ENCODE measurements at regions of chr1 and their contacts with region 1.

Region 1: GRCh38 chr1:27556781-27557595 is 47.0 kb downstream of the AHDC1 start:
- DNase-seq: peak; percentile 85
- ATAC-seq: peak; percentile 84
- H3K4me3 Mint-ChIP-seq: no peak overlapping the region
- H3K27ac Mint-ChIP-seq: peak overlapping the region; percentile 47
- H3K4me1 Mint-ChIP-seq: peaks cover 21% of the 10 kb centered on the region
- H3K27me3 Mint-ChIP-seq: no peaks in the 10 kb centered on the region

Region 2: DNA sequence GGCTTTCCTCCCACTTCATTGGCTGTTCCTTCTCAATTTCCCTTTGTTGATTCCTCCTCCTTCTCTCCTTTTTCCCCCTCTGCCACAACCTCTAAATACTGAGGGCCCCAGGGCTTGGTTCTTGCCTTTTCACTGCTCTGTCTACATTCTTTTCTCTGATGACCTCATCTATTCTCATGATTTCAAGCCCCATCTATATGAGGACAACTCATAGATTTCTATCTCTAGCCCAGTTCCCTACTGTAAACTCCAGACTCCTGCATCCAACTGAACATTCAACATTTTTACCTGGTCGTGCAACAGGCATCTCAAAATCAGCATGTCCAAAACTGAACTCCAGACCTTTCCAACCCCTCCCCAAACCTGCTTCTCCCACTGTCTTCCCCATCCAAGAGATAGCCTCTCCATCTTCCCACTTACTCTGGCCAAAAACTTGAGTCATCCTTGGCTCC is 390.6 kb before region 1 on chr1:
- CTCF ChIA-PET with region 1: no interaction called
- POLR2A ChIA-PET with region 1: no interaction called
- intact Hi-C with region 1: no loop called
- DNase-seq: no peak
- ATAC-seq: no peak
- H3K4me3 Mint-ChIP-seq: no peak overlapping the region
- H3K27ac Mint-ChIP-seq: no peak overlapping the region
- H3K4me1 Mint-ChIP-seq: peaks cover 10% of the 10 kb centered on the region
- H3K27me3 Mint-ChIP-seq: no peaks in the 10 kb centered on the region

Region 3: DNA sequence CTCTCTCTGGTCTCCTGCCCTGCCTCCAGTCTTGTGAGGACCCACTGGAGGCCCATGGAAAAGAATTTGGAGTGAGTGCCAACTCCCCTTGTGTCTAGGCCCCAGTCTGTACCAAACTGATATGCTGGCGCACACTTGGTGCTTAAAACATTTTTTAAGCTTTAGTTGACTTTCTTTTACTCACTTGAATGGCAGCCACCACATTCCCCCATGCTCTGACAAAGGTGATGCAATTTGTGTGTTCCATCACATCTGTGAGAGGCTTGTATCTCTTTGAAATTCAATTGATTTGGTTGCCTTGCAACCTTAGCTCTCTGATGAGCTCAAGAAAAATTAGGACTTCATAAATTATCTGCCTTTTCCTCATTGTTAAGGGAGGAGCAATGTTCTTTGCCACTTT is 353.0 kb before region 1 on chr1:
- CTCF ChIA-PET with region 1: no interaction called
- POLR2A ChIA-PET with region 1: no interaction called
- intact Hi-C with region 1: no loop called
- DNase-seq: no peak
- ATAC-seq: no peak
- H3K4me3 Mint-ChIP-seq: no peak overlapping the region
- H3K27ac Mint-ChIP-seq: no peak overlapping the region
- H3K4me1 Mint-ChIP-seq: no peaks in the 10 kb centered on the region
- H3K27me3 Mint-ChIP-seq: no peaks in the 10 kb centered on the region

Region 4: GRCh38 chr1:27296773-27297291 is 260.2 kb before region 1 on chr1:
- CTCF ChIA-PET with region 1: no interaction called
- POLR2A ChIA-PET with region 1: no interaction called
- intact Hi-C with region 1: no loop called
- DNase-seq: peak; percentile 84
- ATAC-seq: peak; percentile 82
- H3K4me3 Mint-ChIP-seq: no peak overlapping the region
- H3K27ac Mint-ChIP-seq: no peak overlapping the region
- H3K4me1 Mint-ChIP-seq: no peaks in the 10 kb centered on the region
- H3K27me3 Mint-ChIP-seq: no peaks in the 10 kb centered on the region

Region 5: GRCh38 chr1:27542408-27543273 is 14.3 kb before region 1 on chr1:
- CTCF ChIA-PET with region 1: interaction called, 14 read pairs
- POLR2A ChIA-PET with region 1: no interaction called
- intact Hi-C with region 1: no loop called
- DNase-seq: peak; percentile 72
- ATAC-seq: peak; percentile 97
- H3K4me3 Mint-ChIP-seq: no peak overlapping the region
- H3K27ac Mint-ChIP-seq: peak overlapping the region; percentile 73
- H3K4me1 Mint-ChIP-seq: peaks cover 13% of the 10 kb centered on the region
- H3K27me3 Mint-ChIP-seq: no peaks in the 10 kb centered on the region

Region 6: GRCh38 chr1:27568300-27569087 is 11.5 kb after region 1 on chr1:
- CTCF ChIA-PET with region 1: interaction called, 39 read pairs
- POLR2A ChIA-PET with region 1: interaction called, 4 read pairs
- intact Hi-C with region 1: no loop called
- DNase-seq: peak; percentile 95
- ATAC-seq: peak; percentile 97
- H3K4me3 Mint-ChIP-seq: peak overlapping the region; percentile 39
- H3K27ac Mint-ChIP-seq: no peak overlapping the region
- H3K4me1 Mint-ChIP-seq: peaks cover 18% of the 10 kb centered on the region
- H3K27me3 Mint-ChIP-seq: no peaks in the 10 kb centered on the region

Region 7: DNA sequence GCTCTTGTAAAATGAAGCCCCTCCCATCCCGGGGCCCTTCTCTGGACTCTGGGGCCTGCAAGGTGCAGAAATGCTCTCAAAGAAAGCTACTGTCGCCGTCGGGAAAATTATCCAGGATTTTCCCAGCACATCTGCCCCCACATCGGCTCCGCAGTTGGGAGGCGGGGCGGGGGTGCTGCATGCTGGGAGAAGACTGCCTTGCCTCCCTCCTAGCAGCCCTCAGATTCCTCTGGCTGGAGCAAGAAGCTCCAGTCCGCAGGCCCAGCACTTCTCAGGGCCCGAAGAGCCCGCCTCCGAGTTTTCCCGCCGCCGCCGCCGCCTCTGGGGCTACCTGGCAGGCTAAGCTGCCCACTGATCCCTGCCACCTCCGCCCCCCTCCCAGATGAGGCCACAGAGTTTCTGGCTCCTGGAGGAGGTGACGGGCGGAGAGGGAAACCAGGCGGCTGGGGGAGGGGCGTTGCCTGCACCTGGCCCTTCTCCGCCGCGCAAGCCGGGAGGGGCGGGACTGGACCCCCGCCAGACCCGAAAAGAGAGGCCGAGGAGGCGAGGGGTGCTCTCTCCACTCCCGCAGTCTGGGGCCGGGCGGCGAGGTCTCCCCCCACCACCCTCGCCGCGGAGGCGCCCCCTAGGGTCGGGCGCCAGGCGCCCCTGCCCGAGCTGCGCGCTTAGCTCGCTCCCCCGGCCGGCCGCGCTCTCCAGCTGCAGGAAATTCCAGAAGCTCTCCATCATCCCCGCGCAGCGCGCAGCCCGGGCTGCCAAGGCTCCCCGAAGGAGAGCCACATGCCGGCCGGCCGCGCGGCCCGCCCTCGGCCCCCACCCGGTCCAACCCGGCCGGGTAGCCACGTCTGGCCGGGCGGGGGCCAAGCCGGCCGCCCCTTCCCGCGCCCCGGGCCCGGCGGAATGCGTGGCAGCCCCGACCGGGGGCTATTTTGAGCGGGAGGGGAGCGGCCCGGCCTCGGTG is 18.2 kb after region 1 on chr1:
- CTCF ChIA-PET with region 1: interaction called, 10 read pairs
- POLR2A ChIA-PET with region 1: no interaction called
- intact Hi-C with region 1: no loop called
- DNase-seq: no peak
- ATAC-seq: peak; percentile 15
- H3K4me3 Mint-ChIP-seq: no peak overlapping the region
- H3K27ac Mint-ChIP-seq: no peak overlapping the region
- H3K4me1 Mint-ChIP-seq: peaks cover 5% of the 10 kb centered on the region
- H3K27me3 Mint-ChIP-seq: no peaks in the 10 kb centered on the region

Region 8: DNA sequence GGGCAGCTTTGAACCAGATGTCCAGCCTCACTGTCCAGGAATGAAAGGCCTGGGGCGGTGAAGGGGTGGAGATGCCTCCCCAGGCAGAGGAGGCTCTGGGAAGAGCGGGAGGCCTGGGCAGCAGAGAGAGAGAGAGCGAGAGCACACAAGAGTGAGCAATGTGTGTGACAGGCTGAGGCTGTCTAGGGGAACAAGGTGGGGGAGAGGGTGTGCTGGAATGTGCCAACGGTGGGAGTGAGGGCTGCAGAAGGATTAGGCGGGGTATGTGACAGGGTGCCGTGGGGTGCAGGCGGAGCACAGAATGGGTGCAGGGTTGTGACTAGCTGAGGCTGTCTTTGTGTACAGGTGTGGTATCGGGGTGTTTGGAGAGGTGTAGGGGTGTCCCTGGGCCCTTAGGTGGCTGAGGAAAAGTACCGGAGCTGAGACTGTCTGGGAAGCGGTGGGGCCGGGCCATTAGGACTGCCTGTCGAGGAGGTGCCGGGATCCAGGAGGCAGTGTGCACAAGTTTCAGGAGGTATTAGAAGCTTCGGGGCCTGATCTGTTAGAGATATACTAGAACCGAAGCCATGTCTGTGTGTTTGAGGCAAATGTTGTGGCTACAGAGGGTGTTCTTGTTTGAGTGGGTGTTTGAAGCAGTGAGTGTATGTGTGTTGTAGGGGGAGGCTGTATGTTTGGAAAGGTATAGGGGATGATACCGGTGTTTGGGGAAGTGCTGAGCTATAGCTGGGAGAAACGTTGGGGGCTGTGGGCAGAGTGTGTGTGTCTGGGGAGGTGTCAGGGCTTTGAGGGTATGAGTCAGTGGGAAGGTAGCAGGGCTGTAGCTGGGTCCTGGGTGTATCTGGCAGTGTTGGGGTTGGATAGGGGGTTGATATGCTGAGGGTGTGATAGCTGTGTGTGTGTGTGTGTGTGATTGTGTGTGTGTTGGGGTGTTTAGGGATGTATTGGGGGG is 37.8 kb after region 1 on chr1:
- CTCF ChIA-PET with region 1: interaction called, 14 read pairs
- POLR2A ChIA-PET with region 1: interaction called, 4 read pairs
- intact Hi-C with region 1: loop called in 1 of 2 experiments (anchors 1 kb)
- DNase-seq: peak; percentile 51
- ATAC-seq: peak; percentile 66
- H3K4me3 Mint-ChIP-seq: no peak overlapping the region
- H3K27ac Mint-ChIP-seq: no peak overlapping the region
- H3K4me1 Mint-ChIP-seq: peaks cover 14% of the 10 kb centered on the region
- H3K27me3 Mint-ChIP-seq: no peaks in the 10 kb centered on the region

Measured in activated CD4-positive, alpha-beta T cell treated with anti-CD3 and anti-CD28 coated beads for 36 hours (primary cell).